PC-9 (cell line): ENCODE measurements at regions of chr11 and their contacts with region 1.

Region 1: GRCh38 chr11:19553683-19554333 is 158.8 kb upstream of the NAV2 start:
- DNase-seq: peak; percentile 68 to 81
- H3K4me3 ChIP-seq: no peak overlapping the region
- H3K27ac ChIP-seq: no peak overlapping the region
- H3K4me1 ChIP-seq: no peaks in the 10 kb centered on the region
- H3K27me3 ChIP-seq: no peaks in the 10 kb centered on the region
- CTCF ChIP-seq: peak; percentile 99

Region 2: GRCh38 chr11:19160847-19161246 is 393.0 kb before region 1 on chr11:
- CTCF ChIA-PET with region 1: no interaction called
- POLR2A ChIA-PET with region 1: no interaction called
- intact Hi-C with region 1: loop called (anchors 5 kb)
- DNase-seq: no peak
- H3K4me3 ChIP-seq: no peak overlapping the region
- H3K27ac ChIP-seq: no peak overlapping the region
- H3K4me1 ChIP-seq: no peaks in the 10 kb centered on the region
- H3K27me3 ChIP-seq: no peaks in the 10 kb centered on the region
- CTCF ChIP-seq: peak; percentile 36; the same call in 1 of the 2 replicates

Region 3: GRCh38 chr11:19259487-19260345 is 294.1 kb before region 1 on chr11:
- CTCF ChIA-PET with region 1: interaction called, 6 read pairs
- POLR2A ChIA-PET with region 1: no interaction called
- intact Hi-C with region 1: loop called (anchors 1 kb)
- DNase-seq: peak; percentile 49 to 73
- H3K4me3 ChIP-seq: no peak overlapping the region
- H3K27ac ChIP-seq: no peak overlapping the region
- H3K4me1 ChIP-seq: no peaks in the 10 kb centered on the region
- H3K27me3 ChIP-seq: no peaks in the 10 kb centered on the region
- CTCF ChIP-seq: peak; percentile 99

Region 4: GRCh38 chr11:19326499-19326898 is 227.3 kb before region 1 on chr11:
- CTCF ChIA-PET with region 1: interaction called, 6 read pairs
- POLR2A ChIA-PET with region 1: no interaction called
- intact Hi-C with region 1: loop called (anchors 1 kb)
- DNase-seq: peak in 1 of 2 experiments; percentile 59
- H3K4me3 ChIP-seq: no peak overlapping the region
- H3K27ac ChIP-seq: no peak overlapping the region
- H3K4me1 ChIP-seq: 0 out of 2 replicates have a peak, but pooled peaks cover 10% of the 10 kb centered on the region
- H3K27me3 ChIP-seq: no peaks in the 10 kb centered on the region
- CTCF ChIP-seq: peak; percentile 69

Region 5: GRCh38 chr11:19441752-19442553 is 111.9 kb before region 1 on chr11:
- CTCF ChIA-PET with region 1: no interaction called
- POLR2A ChIA-PET with region 1: no interaction called
- intact Hi-C with region 1: loop called (anchors 5 kb)
- DNase-seq: peak; percentile 91 to 100
- H3K4me3 ChIP-seq: peak overlapping the region; percentile 5; the same call in 1 of the 2 replicates
- H3K27ac ChIP-seq: peak overlapping the region; percentile 89
- H3K4me1 ChIP-seq: peaks cover 92% of the 10 kb centered on the region
- H3K27me3 ChIP-seq: no peaks in the 10 kb centered on the region
- CTCF ChIP-seq: no peak

Region 6: DNA sequence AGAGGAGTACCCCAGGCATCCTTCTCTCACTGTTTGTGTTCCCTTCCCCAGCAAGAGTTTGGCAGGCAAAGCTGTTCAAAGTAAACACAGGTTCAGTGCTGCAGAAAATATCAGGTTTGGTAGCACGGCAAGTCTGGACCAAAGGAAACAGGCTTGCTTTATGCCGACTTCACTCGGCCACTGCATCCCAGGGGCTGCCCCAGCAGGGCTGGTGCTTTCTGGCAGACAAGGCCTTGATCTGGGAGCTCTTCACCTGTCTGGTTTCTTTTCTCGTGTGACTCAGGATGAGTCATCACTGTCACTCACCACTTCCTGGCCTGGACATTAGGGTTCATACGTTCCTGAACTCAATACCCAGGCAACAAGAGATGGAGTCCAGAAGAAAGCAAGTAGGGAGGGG is 106.3 kb after region 1 on chr11:
- CTCF ChIA-PET with region 1: no interaction called
- POLR2A ChIA-PET with region 1: no interaction called
- intact Hi-C with region 1: no loop called
- DNase-seq: peak; percentile 79 to 92
- H3K4me3 ChIP-seq: no peak overlapping the region
- H3K27ac ChIP-seq: peak overlapping the region; percentile 63
- H3K4me1 ChIP-seq: peaks cover 29% of the 10 kb centered on the region
- H3K27me3 ChIP-seq: no peaks in the 10 kb centered on the region
- CTCF ChIP-seq: no peak

Region 7: GRCh38 chr11:19951558-19952115 is 397.8 kb after region 1 on chr11:
- CTCF ChIA-PET with region 1: no interaction called
- POLR2A ChIA-PET with region 1: no interaction called
- intact Hi-C with region 1: loop called (anchors 5 kb)
- DNase-seq: peak in 1 of 2 experiments; percentile 47
- H3K4me3 ChIP-seq: no peak overlapping the region
- H3K27ac ChIP-seq: no peak overlapping the region
- H3K4me1 ChIP-seq: peaks cover 3% of the 10 kb centered on the region; the same call in 1 of the 2 replicates
- H3K27me3 ChIP-seq: no peaks in the 10 kb centered on the region
- CTCF ChIP-seq: peak; percentile 85

Region 8: GRCh38 chr11:20337526-20338154 is 783.8 kb after region 1 on chr11:
- CTCF ChIA-PET with region 1: interaction called, 15 read pairs
- POLR2A ChIA-PET with region 1: no interaction called
- intact Hi-C with region 1: no loop called
- DNase-seq: no peak
- H3K4me3 ChIP-seq: no peak overlapping the region
- H3K27ac ChIP-seq: no peak overlapping the region
- H3K4me1 ChIP-seq: no peaks in the 10 kb centered on the region
- H3K27me3 ChIP-seq: peaks cover 62% of the 10 kb centered on the region
- CTCF ChIP-seq: peak; percentile 55